ENCODE measurements at regions of chr20 and their contacts with region 1.

Region 1: GRCh38 chr20:46681032-46681854 is 8.0 kb downstream of the TP53RK start:
- DNase-seq: peak; percentile 87
- ATAC-seq: peak; percentile 82
- H3K4me3 Mint-ChIP-seq: no peak overlapping the region
- H3K27ac Mint-ChIP-seq: peak overlapping the region; percentile 75
- H3K4me1 Mint-ChIP-seq: peaks cover 42% of the 10 kb centered on the region
- H3K27me3 Mint-ChIP-seq: no peaks in the 10 kb centered on the region
- CTCF ChIP-seq: peak; percentile 85

Region 2: GRCh38 chr20:46520976-46521579 is 160.2 kb before region 1 on chr20:
- CTCF ChIA-PET with region 1: interaction called, 116 read pairs
- POLR2A ChIA-PET with region 1: interaction called, 3 read pairs
- intact Hi-C with region 1: loop called (anchors 1 kb)
- DNase-seq: peak; percentile 68
- ATAC-seq: peak; percentile 98
- H3K4me3 Mint-ChIP-seq: no peak overlapping the region
- H3K27ac Mint-ChIP-seq: no peak overlapping the region
- H3K4me1 Mint-ChIP-seq: no peaks in the 10 kb centered on the region
- H3K27me3 Mint-ChIP-seq: peaks cover 17% of the 10 kb centered on the region
- CTCF ChIP-seq: peak; percentile 68

Region 3: DNA sequence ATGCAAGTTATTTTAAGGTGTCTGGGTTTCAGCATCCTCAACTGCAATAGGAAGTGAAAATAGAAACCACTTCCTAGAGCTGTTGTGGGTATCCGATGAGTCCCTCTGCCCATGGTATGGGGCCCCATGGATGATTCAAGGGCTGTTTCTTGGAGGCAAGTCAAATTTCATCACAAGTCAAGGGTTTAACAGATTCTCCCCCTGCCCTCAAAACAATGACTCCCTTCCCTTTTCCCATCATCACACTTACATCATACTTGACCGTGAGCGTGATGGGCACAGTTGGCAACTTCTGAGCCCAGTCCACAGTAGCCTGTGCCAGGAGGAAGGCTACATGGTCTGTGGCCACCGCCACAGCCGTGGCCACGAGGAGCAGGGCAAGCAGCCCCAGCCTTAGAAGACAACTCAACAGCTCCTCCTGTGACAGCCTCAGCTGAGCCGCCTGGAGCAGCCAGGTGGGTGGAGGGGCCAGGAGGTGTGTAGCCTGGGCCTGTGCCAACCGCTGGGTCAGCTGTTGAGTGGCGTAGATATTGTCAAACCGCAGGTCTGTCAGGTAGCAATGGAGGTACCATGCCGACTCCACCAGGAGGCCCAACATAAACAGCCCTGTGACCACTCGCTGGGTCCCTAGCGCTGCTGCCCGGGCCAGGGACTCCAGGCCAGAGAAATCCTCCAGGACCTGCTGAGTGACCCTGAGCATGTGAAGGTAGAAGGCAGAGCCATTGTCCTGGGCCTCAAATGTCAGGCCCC is 136.0 kb before region 1 on chr20:
- CTCF ChIA-PET with region 1: interaction called, 13 read pairs
- POLR2A ChIA-PET with region 1: interaction called, 3 read pairs
- intact Hi-C with region 1: loop called (anchors 10 kb)
- DNase-seq: peak; percentile 82
- ATAC-seq: peak; percentile 90
- H3K4me3 Mint-ChIP-seq: peak overlapping the region; percentile 32
- H3K27ac Mint-ChIP-seq: peak overlapping the region; percentile 94
- H3K4me1 Mint-ChIP-seq: peaks cover 20% of the 10 kb centered on the region
- H3K27me3 Mint-ChIP-seq: peaks cover 10% of the 10 kb centered on the region
- CTCF ChIP-seq: no peak

Region 4: DNA sequence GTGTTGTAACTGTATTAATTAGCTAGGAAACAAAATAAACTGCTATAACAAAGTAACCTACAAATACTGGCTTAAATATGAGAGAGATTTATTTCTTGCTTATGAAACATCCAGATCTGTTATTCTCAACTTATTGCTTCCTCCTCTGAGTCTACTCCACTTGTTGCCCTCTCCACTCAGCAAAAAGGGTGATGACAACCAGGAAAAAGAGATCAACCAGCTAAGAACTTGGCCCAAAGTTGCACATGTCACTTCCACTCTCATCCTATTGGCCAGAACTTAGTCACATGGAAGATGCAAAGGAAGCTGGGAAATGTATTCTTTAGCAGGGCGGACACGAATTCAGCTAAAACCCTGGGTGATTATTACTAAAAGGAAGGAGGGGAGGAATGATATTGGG is 13.3 kb after region 1 on chr20:
- CTCF ChIA-PET with region 1: interaction called, 17 read pairs
- POLR2A ChIA-PET with region 1: interaction called, 3 read pairs
- intact Hi-C with region 1: no loop called
- DNase-seq: no peak
- ATAC-seq: no peak
- H3K4me3 Mint-ChIP-seq: no peak overlapping the region
- H3K27ac Mint-ChIP-seq: no peak overlapping the region
- H3K4me1 Mint-ChIP-seq: peaks cover 10% of the 10 kb centered on the region
- H3K27me3 Mint-ChIP-seq: no peaks in the 10 kb centered on the region
- CTCF ChIP-seq: no peak

Measured in activated CD8-positive, alpha-beta T cell treated with anti-CD3 and anti-CD28 coated beads for 36 hours (primary cell).